Cardiac septum (tissue), 1 donor: ENCODE measurements at regions of chr5 and their contacts with region 1.

Region 1: GRCh38 chr5:58460732-58461286 is 923 bp upstream of the PLK2 start:
- DNase-seq: peak; percentile 96

Region 2: DNA sequence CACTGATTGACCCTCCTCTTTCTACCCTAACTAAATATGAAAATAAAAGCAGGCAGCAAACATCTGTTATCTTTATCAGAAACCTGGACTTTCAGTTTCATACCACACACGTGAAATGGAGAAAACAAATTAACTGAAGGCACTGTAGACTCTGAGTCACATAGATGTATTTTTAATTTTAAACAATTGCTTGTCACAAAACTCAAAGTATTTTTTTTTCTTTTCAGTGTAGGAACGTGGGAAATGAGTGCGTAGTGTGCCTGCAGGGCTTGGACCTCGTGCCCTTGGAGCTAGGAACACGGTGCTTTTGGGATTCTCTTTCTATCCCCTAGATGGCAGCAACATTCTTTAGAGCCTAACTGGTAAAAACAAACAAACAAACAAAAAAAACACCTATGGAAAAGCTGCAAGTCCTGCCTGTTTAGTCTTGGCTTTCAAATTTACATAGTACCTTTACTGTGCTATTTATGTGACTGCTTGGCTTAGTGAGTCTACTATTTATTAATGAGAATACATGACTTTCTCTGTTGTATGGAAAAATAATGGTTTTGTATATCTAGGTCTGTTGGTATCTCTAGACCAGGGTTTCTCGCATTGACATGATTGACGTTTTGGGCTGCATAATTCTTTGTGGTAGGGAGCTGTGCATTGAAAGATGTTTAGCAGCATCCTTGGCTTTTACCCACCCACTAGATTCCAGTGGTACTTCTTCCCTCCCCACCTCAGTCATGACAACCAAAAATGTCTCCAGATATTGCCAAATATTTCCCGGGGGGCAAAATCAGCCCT is 961.4 kb before region 1 on chr5:
- intact Hi-C with region 1: loop called (anchors 1 kb)
- DNase-seq: no peak

Region 3: GRCh38 chr5:57779383-57780223 is 681.2 kb before region 1 on chr5:
- intact Hi-C with region 1: loop called (anchors 1 kb)
- DNase-seq: no peak

Region 4: GRCh38 chr5:58071566-58071965 is 389.2 kb before region 1 on chr5:
- intact Hi-C with region 1: loop called (anchors 1 kb)
- DNase-seq: peak; percentile 88

Region 5: DNA sequence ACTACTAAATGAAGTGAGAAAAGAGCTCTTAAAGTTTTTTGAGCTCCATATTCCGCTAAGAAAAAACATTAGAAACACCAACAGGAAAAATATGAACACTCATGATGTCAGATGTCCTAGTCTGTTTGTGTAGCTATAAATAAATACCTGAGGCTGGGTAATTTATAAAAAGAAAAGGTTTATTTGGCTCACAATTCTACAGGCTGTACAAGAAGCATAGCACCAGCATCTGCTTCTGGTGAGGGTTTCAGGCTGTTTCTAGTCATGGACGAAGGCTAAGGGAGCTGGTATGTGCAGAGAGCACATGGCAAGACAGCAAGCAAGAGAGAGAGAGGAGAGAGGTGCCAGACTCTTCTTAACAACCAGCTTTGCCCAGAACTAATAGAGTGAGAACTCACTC is 187.1 kb before region 1 on chr5:
- intact Hi-C with region 1: loop called (anchors 5 kb)
- DNase-seq: no peak

Region 6: GRCh38 chr5:58629271-58630159 is 168.7 kb after region 1 on chr5:
- intact Hi-C with region 1: no loop called
- DNase-seq: no peak